Cardiac septum (tissue), 1 donor: ENCODE measurements at regions of chr6 and their contacts with region 1.

Region 1: GRCh38 chr6:31952140-31952805 is 6.4 kb downstream of the CFB start:
- DNase-seq: no peak

Region 2: DNA sequence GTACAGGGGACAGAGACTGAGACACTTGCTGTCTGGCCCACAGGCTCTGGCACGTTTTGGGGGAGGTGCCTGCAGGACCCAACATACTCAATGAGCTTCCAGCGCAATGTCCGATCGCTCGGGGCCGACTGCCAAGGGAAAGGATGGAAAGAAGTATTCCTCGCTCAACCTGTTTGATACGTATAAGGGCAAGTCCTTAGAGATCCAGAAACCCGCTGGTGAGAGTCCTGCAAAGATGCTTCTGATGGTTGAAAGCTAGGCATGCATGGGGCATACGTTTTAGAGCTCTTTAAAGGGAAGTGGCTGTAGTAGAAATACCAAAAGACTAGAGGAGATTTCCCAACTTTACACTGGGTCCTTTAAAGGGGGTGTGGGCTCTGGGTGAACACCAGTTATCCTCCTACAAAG is 329.6 kb before region 1 on chr6:
- intact Hi-C with region 1: no loop called
- DNase-seq: no peak

Region 3: DNA sequence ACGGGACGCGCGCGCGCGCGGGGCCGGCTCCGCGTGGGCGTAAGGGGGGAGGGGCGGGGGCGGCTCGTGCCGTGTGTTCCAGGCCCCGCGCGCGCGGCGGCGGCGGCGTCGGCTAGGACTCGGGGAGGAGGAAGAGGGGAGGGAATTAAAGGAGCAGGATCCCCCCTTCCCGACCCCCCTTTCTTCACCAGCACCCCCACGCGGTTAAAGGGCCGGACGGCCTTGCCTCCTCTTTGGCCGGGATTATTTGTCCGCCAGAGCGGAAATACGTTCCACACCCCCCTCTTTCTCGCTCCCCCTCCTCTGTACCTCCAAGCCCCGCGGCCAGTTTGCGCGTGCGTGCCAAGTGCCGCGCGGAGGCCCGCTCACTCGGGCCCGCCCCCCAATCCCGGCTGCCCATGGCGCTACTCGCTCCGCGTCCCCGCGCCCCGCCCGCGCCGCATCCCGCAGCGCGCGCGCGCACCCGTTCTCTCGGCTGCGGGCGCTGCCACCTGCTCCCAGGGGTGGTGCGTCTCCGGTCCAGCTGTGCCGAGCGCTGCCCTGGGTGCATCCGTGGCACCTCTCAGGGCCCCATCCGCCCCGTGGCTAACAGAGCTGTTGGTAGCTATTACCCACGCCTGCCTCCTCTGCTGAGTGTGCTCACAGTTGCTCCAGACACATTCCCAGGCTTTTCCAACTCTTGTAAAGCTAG is 50.2 kb before region 1 on chr6 and contains the start of gene ZBTB12:
- intact Hi-C with region 1: loop called (anchors 5 kb)
- DNase-seq: peak; percentile 94
- total RNA-seq, gene ZBTB12: 5.2 TPM

Region 4: DNA sequence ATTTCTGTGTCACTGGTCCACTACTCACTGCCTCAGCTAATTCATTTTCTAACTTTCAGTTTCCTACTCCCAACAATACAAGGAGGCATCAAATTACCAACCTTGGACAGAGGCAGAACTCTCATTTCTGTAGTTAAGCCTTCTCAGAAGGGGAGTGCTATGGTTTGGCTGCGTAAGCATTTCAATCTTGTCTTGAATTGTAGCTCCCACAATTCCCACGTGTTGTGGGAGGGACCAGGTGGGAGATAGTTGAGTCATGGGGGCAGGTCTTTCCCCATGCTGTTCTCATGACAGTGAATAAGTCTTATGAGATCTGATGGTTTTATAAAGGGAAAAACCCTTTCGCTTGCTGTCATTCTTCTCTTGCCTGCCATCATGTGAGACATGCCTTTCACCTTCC is 510.3 kb after region 1 on chr6:
- intact Hi-C with region 1: no loop called
- DNase-seq: no peak